ENCODE measurements at regions of chr10 and their contacts with region 1.

Region 1: DNA sequence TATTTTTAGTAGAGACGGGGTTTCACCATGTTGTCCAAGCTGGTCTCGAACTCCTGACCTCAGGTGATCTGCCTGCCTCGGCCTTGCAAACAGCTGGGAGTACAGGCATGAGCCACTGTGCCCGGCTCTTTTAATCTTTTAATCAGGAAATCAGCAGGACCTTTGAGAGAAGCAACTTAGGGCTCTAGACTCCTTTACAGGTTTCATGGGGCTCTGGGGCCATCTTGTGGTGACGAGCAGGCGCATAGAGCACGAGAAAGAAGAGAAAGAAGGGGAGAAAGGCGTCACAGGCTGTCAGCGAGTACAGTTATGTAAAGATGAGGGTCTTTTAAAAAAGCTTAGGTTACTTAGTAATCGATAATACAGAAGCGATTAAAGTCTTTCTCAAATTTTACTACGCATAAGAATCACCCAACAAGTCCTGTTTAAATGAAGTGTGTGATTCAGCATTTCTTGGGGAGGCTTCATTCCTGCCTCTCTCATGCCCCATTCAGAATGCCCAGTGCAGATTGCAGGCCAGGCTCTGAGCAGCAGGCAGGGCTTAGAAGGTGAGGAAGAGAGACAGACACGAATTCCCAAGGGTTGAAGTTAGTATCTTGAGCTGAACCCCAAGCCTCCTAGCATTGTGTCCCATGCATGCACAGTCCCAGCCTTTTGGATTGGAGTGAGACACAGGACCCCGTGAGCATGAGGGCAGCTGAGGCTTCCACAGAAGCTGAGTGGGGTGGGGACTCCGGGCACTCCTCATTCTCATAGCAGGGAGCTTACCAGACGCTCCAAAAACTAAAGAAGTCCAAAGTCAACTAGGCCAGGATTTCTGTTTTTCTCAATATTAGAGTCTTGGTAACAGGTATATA is 23.6 kb upstream of the PFKP start:
- DNase-seq: peak; percentile 50 to 69
- H3K4me3 ChIP-seq: no peak overlapping the region
- H3K27ac ChIP-seq: no peak overlapping the region
- H3K4me1 ChIP-seq: peaks cover 36% of the 10 kb centered on the region
- H3K27me3 ChIP-seq: no peaks in the 10 kb centered on the region
- CTCF ChIP-seq: peak; percentile 76

Region 2: GRCh38 chr10:2839081-2839725 is 204.5 kb before region 1 on chr10:
- CTCF ChIA-PET with region 1: no interaction called
- POLR2A ChIA-PET with region 1: no interaction called
- intact Hi-C with region 1: loop called (anchors 1 kb)
- DNase-seq: peak in 1 of 2 experiments; percentile 18
- H3K4me3 ChIP-seq: no peak overlapping the region
- H3K27ac ChIP-seq: no peak overlapping the region
- H3K4me1 ChIP-seq: no peaks in the 10 kb centered on the region
- H3K27me3 ChIP-seq: peaks cover 62% of the 10 kb centered on the region
- CTCF ChIP-seq: peak; percentile 49; the same call in 1 of the 2 replicates

Region 3: DNA sequence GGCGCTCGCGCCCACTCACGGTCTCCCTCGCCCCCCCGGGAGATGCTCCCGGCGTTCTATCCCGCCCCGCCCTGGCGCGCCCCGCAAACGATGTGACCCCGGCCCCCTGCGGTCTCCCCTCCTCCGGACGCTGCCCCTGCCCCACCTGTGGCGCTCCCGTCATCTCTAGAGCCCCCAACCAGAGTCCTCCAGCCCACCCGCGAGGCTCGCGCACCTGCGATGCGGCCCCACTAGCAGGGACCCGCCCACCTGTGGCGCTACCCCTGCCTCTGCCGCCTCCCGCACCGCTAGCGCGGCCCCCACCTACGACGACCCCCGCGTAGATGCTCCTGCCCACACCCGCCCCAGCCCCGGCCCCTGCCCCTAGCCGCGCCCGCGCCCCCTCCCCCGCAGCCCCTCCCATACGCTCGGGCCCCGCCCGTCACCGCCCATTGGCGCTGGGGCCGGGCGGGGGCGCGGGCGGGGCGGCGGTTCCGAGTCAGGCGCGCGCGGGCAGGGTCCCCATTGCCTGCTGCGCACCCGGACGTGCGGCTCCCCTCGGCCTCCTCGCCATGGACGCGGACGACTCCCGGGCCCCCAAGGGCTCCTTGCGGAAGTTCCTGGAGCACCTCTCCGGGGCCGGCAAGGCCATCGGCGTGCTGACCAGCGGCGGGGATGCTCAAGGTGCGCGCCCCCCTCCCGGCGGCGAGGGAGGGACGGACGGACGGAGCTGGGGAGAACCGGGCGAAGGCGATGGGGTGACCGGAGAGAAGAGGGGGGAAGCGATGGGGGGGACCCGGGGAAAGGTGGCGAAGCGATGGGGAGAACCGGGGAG is 23.5 kb after region 1 on chr10 and contains the start of gene PFKP:
- CTCF ChIA-PET with region 1: interaction called, 7 read pairs
- POLR2A ChIA-PET with region 1: interaction called, 4 read pairs
- intact Hi-C with region 1: loop called (anchors 2 kb)
- DNase-seq: peak in 1 of 2 experiments; percentile 62
- H3K4me3 ChIP-seq: peak within 1 kb of the TSS; percentile 90
- H3K27ac ChIP-seq: no peak within 1 kb of the TSS
- H3K4me1 ChIP-seq: peaks cover 21% of the 10 kb centered on the region; the same call in 1 of the 2 replicates
- H3K27me3 ChIP-seq: no peaks in the 10 kb centered on the region
- CTCF ChIP-seq: no peak
- total RNA-seq, gene PFKP: 222 and 234 TPM in 2 replicates

Region 4: DNA sequence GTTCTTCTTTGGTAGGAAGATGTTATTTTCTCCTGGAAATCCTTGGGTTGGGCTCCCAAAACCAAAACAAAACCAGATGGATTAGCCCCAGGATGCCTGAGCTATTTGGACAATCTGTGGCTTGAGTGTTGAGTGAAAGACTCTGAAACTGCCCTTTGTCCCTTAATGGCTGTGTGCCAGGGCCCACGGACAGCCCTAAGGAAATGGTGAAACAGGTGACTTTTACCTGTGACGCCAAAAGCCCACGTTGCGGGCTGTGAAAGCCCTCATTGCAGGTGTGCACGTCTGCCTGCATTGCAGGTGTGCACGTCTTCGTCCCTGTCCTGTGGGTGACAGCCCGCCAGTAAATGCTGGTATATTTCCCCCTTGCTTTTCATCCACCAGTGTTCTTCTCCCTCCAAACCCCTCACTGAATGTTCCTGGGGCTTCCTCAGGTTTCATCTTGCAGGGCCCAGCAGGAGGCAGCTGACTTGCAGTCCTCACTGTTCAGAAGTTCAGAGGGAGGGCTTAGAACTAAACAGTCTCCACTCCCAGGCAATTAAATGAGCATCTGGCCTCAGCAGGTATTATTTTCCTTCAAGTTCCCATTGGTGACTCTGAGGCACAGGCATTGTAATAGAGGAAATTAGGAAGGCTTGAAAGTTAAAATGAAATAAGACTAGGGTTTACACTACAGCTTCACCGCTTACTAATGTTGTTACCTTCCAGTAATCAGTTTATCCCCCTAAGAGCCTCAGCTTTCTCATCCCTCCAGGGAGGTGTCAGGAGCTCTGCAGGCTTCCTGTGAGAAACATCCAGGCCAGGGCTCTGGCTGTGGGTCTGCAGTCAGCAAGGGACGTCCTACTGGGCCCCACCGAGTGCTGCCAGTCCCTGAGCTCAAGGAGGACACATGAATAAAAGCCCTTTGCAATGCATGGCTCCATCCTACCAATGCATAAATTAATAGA is 34.5 kb after region 1 on chr10:
- CTCF ChIA-PET with region 1: no interaction called
- POLR2A ChIA-PET with region 1: no interaction called
- intact Hi-C with region 1: no loop called
- DNase-seq: no peak
- H3K4me3 ChIP-seq: no peak overlapping the region
- H3K27ac ChIP-seq: no peak overlapping the region
- H3K4me1 ChIP-seq: peaks cover 5% of the 10 kb centered on the region; the same call in 1 of the 2 replicates
- H3K27me3 ChIP-seq: no peaks in the 10 kb centered on the region
- CTCF ChIP-seq: no peak

Region 5: GRCh38 chr10:3107426-3107961 is 63.8 kb after region 1 on chr10:
- CTCF ChIA-PET with region 1: no interaction called
- POLR2A ChIA-PET with region 1: no interaction called
- intact Hi-C with region 1: loop called (anchors 2 kb)
- DNase-seq: peak in 1 of 2 experiments; percentile 74
- H3K4me3 ChIP-seq: no peak overlapping the region
- H3K27ac ChIP-seq: no peak overlapping the region
- H3K4me1 ChIP-seq: no peaks in the 10 kb centered on the region
- H3K27me3 ChIP-seq: no peaks in the 10 kb centered on the region
- CTCF ChIP-seq: no peak

Region 6: DNA sequence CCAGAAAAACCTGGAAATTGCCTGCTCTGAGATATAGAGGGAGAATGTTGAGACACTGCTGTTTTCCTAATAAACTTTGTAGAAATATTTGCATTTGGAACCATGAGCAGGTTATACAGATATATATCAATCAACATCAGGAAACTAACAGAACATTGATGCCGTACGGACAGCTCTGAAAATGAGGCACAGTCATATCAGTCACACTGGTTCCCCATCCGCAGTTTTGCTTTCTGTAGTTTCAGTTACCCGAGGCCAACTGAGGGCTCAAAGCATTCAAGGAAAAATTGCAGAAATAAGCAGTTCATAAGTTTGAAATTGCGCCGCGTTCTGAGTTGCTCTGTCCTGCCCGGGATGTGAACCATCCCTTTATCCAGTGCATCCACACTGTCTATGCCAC is 603.3 kb after region 1 on chr10:
- CTCF ChIA-PET with region 1: no interaction called
- POLR2A ChIA-PET with region 1: no interaction called
- intact Hi-C with region 1: no loop called
- DNase-seq: no peak
- H3K4me3 ChIP-seq: no peak overlapping the region
- H3K27ac ChIP-seq: no peak overlapping the region
- H3K4me1 ChIP-seq: no peaks in the 10 kb centered on the region
- H3K27me3 ChIP-seq: no peaks in the 10 kb centered on the region
- CTCF ChIP-seq: no peak